GM12878 (cell line): ENCODE measurements at regions of chr9 and their contacts with region 1.

Region 1: DNA sequence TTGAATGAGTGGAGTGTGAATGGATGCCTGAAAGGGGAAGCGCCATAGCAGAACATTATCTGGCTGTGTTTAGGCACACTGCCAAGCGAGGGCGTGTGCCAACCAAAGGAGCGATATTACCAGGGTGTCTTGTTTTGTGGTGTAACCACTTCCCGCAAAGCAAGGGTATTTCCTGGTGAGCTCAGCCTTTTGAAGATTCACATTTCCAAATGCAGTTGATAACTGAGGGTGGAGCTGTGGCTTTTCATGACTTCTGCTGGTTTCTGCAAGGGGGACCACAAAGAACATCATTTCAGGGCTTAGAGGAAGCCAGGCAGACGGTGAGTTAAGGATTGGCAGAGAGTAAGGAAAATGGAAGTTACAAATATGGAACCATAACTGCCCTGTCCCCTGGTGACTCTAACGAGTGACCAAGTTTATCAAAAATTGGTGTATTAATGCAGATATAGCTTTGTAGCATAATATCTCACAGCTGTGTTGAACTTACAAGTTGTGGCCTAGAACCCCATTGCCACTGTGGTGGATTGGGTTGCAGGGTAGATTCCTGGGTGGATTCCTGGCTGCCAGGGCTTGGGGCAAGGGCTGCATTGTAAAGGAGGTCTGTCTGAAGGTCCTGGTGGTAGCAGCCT is 71.4 kb downstream of the RALGPS1 start:
- DNase-seq: peak; percentile 92
- ATAC-seq: peak; percentile 91
- H3K4me3 ChIP-seq: no peak overlapping the region
- H3K27ac ChIP-seq: peak overlapping the region; percentile 29
- H3K4me1 ChIP-seq: peaks cover 14% of the 10 kb centered on the region
- H3K27me3 ChIP-seq: no peaks in the 10 kb centered on the region
- CTCF ChIP-seq: peak in 1 of 3 experiments; percentile 19; a peak in 3 of 6 replicates
- EP300 ChIP-seq: peak; percentile 77 to 94; a peak in 3 of 4 replicates
- POLR2A ChIP-seq: no peak
- RAD21 ChIP-seq: peak; percentile 50

Region 2: GRCh38 chr9:126965541-126966428 is 20.2 kb before region 1 on chr9:
- CTCF ChIA-PET with region 1: interaction called, 18 read pairs
- POLR2A ChIA-PET with region 1: no interaction called
- RAD21 ChIA-PET with region 1: interaction called, 12 read pairs
- SMC1A ChIA-PET with region 1: interaction called, 22 read pairs
- in situ Hi-C with region 1: no loop called
- intact Hi-C with region 1: no loop called
- DNase-seq: no peak
- ATAC-seq: peak; percentile 99
- H3K4me3 ChIP-seq: no peak overlapping the region
- H3K27ac ChIP-seq: no peak overlapping the region
- H3K4me1 ChIP-seq: no peaks in the 10 kb centered on the region
- H3K27me3 ChIP-seq: no peaks in the 10 kb centered on the region
- CTCF ChIP-seq: peak; percentile 82 to 84 (median 83)
- EP300 ChIP-seq: no peak
- POLR2A ChIP-seq: no peak
- RAD21 ChIP-seq: peak; percentile 95

Region 3: GRCh38 chr9:127004946-127005769 is 19.2 kb after region 1 on chr9:
- CTCF ChIA-PET with region 1: interaction called, 53 read pairs
- POLR2A ChIA-PET with region 1: interaction called, 27 read pairs
- RAD21 ChIA-PET with region 1: interaction called, 97 read pairs
- SMC1A ChIA-PET with region 1: interaction called, 110 read pairs
- in situ Hi-C with region 1: no loop called
- intact Hi-C with region 1: loop called (anchors 1 kb)
- DNase-seq: peak; percentile 98
- ATAC-seq: peak; percentile 85
- H3K4me3 ChIP-seq: peak overlapping the region; percentile 4; the same call in 1 of the 2 replicates
- H3K27ac ChIP-seq: peak overlapping the region; percentile 77
- H3K4me1 ChIP-seq: peaks cover 54% of the 10 kb centered on the region
- H3K27me3 ChIP-seq: no peaks in the 10 kb centered on the region
- CTCF ChIP-seq: no peak
- EP300 ChIP-seq: peak; percentile 99
- POLR2A ChIP-seq: no peak
- RAD21 ChIP-seq: peak; percentile 32

Region 4: GRCh38 chr9:127116957-127117356 is 131.0 kb after region 1 on chr9:
- CTCF ChIA-PET with region 1: interaction called, 7 read pairs
- POLR2A ChIA-PET with region 1: interaction called, 5 read pairs
- RAD21 ChIA-PET with region 1: interaction called, 18 read pairs
- SMC1A ChIA-PET with region 1: interaction called, 14 read pairs
- in situ Hi-C with region 1: no loop called
- intact Hi-C with region 1: no loop called
- DNase-seq: no peak
- ATAC-seq: peak; percentile 50
- H3K4me3 ChIP-seq: no peak overlapping the region
- H3K27ac ChIP-seq: no peak overlapping the region
- H3K4me1 ChIP-seq: peaks cover 21% of the 10 kb centered on the region
- H3K27me3 ChIP-seq: no peaks in the 10 kb centered on the region
- CTCF ChIP-seq: no peak
- EP300 ChIP-seq: no peak
- POLR2A ChIP-seq: no peak
- RAD21 ChIP-seq: 0 out of 2 replicates have a peak, but pooled peaks have one; percentile 0

Region 5: DNA sequence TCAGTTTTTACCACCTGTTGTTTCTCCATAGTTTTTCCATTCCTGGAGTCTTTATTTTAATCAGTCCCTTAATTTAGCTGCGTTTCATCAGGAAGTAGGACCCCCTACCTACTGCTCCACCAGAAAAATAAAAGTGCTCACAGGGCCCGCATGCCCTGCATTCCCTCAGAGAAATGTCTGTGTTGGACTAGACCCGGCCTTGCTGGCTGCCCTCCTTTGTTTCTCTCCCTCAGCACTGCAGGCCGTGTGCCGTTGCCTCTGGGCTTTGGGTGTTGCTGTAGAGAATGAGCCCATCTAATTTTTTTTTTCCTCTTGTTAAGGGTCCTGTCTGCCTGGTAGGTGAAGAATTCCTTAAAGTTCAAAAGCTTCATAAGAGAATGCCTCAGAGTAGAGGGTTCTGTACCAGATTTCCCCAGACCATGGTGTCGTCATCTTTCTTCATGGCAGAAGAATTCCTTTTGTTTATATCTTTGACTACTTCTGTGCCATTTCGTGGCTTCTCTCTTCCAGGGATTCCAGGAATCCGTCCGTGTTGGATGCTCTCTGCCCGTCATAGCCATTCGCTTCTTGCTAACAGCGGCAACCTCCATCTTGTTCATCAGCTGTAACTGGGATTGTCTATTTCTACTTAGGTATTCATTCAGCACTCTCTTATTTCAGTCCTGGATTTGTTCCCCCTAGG is 186.2 kb after region 1 on chr9:
- CTCF ChIA-PET with region 1: interaction called, 29 read pairs
- POLR2A ChIA-PET with region 1: interaction called, 13 read pairs
- RAD21 ChIA-PET with region 1: interaction called, 111 read pairs
- SMC1A ChIA-PET with region 1: interaction called, 96 read pairs
- in situ Hi-C with region 1: no loop called
- intact Hi-C with region 1: loop called (anchors 5 kb)
- DNase-seq: no peak
- ATAC-seq: no peak
- H3K4me3 ChIP-seq: no peak overlapping the region
- H3K27ac ChIP-seq: no peak overlapping the region
- H3K4me1 ChIP-seq: peaks cover 6% of the 10 kb centered on the region
- H3K27me3 ChIP-seq: no peaks in the 10 kb centered on the region
- CTCF ChIP-seq: no peak
- EP300 ChIP-seq: no peak
- POLR2A ChIP-seq: no peak
- RAD21 ChIP-seq: no peak

Region 6: DNA sequence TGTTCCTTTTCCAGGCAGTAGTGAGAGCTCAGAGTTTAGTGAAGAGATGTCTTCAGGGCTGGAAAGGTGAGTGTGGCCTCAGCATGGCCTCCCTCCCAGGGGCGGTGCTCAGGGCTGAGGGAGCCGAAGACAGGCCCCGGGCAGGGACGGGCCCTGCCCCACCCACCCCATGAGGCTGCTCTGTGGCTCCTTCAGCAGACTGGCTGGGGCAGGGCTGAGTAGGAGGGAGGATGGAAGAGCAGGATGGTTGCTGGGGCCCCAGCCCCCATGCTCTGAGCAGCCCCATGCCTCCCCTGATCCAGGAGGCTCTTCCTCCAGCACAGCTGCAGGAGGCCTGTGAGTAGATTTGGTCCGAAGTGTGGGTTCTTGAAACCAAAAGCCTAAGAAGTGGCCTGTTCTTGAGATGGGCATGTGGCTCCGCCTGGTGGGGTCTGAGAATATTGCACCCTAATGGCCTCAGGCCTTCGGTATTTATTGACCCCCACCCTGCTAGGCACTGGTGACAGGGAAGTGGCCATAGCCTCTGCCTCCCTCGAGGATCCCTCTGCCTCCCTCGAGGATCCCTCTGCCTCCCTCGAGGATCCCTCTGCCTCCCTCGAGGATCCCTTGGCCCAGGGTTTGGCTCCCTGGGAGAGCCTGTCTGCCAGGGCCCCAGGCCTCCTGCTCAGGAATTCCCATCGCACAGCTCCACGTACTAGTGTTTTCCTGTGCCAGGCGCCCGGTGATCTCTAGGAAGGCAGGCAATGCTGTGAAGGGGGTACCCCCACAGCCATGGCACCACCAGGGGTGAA is 213.2 kb after region 1 on chr9:
- CTCF ChIA-PET with region 1: interaction called, 26 read pairs
- POLR2A ChIA-PET with region 1: interaction called, 4 read pairs
- RAD21 ChIA-PET with region 1: interaction called, 49 read pairs
- SMC1A ChIA-PET with region 1: interaction called, 39 read pairs
- in situ Hi-C with region 1: no loop called
- intact Hi-C with region 1: no loop called
- DNase-seq: peak; percentile 71
- ATAC-seq: peak; percentile 93
- H3K4me3 ChIP-seq: no peak overlapping the region
- H3K27ac ChIP-seq: no peak overlapping the region
- H3K4me1 ChIP-seq: peaks cover 6% of the 10 kb centered on the region
- H3K27me3 ChIP-seq: no peaks in the 10 kb centered on the region
- CTCF ChIP-seq: peak; percentile 92 to 98 (median 96)
- EP300 ChIP-seq: no peak
- POLR2A ChIP-seq: no peak
- RAD21 ChIP-seq: peak; percentile 100